ENCODE measurements at regions of chr1 and their contacts with region 1.

Region 1: GRCh38 chr1:172990598-172991215 is 60.0 kb downstream of the TNFSF18 start:
- DNase-seq: no peak
- ATAC-seq: no peak
- H3K4me3 Mint-ChIP-seq: no peak overlapping the region
- H3K27ac Mint-ChIP-seq: no peak overlapping the region
- H3K4me1 Mint-ChIP-seq: no peaks in the 10 kb centered on the region
- H3K27me3 Mint-ChIP-seq: no peaks in the 10 kb centered on the region
- CTCF ChIP-seq: no peak

Region 2: GRCh38 chr1:172653015-172653709 is 337.5 kb before region 1 on chr1:
- CTCF ChIA-PET with region 1: no interaction called
- POLR2A ChIA-PET with region 1: no interaction called
- intact Hi-C with region 1: no loop called
- DNase-seq: no peak
- ATAC-seq: no peak
- H3K4me3 Mint-ChIP-seq: no peak overlapping the region
- H3K27ac Mint-ChIP-seq: no peak overlapping the region
- H3K4me1 Mint-ChIP-seq: no peaks in the 10 kb centered on the region
- H3K27me3 Mint-ChIP-seq: peaks cover 15% of the 10 kb centered on the region
- CTCF ChIP-seq: no peak

Region 3: GRCh38 chr1:173020138-173020750 is 29.5 kb after region 1 on chr1:
- CTCF ChIA-PET with region 1: no interaction called
- POLR2A ChIA-PET with region 1: no interaction called
- intact Hi-C with region 1: no loop called
- DNase-seq: no peak
- ATAC-seq: peak; percentile 84
- H3K4me3 Mint-ChIP-seq: peak overlapping the region; percentile 56
- H3K27ac Mint-ChIP-seq: peak overlapping the region; percentile 90
- H3K4me1 Mint-ChIP-seq: peaks cover 61% of the 10 kb centered on the region
- H3K27me3 Mint-ChIP-seq: no peaks in the 10 kb centered on the region
- CTCF ChIP-seq: no peak

Region 4: GRCh38 chr1:173050865-173051264 is 60.2 kb after region 1 on chr1 and contains the start of gene TNFSF18:
- CTCF ChIA-PET with region 1: no interaction called
- POLR2A ChIA-PET with region 1: interaction called, 13 read pairs
- intact Hi-C with region 1: no loop called
- DNase-seq: no peak
- ATAC-seq: no peak
- H3K4me3 Mint-ChIP-seq: no peak within 1 kb of the TSS
- H3K27ac Mint-ChIP-seq: no peak within 1 kb of the TSS
- H3K4me1 Mint-ChIP-seq: peaks cover 27% of the 10 kb centered on the region
- H3K27me3 Mint-ChIP-seq: peaks cover 3% of the 10 kb centered on the region
- CTCF ChIP-seq: no peak
- total RNA-seq, gene TNFSF18: not detected in 2 replicates